ENCODE measurements at regions of chr4 and their contacts with region 1.

Region 1: DNA sequence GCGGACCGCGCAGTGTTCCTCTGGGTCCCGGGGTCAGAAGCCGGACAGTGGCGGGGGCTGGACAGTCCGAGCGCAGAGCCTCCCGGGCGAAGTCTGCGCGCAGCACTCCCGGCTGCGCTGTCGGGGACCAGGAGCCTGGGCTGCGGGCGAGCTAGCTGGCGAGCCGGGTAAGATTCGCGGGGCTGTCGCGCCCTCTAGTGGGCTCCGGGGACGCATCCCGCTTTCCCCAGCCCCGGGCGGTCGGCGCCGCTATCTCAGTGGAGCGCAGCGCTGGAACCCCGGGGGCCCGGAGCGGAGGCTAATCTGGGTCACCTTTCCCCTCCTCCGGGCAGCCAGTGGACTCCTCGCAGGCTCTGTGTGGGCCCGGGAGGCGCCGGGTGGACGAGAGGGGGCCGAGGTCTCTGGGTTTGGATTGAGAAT is 4.2 kb downstream of the PDGFRA start:
- DNase-seq: peak; percentile 82
- H3K4me3 Mint-ChIP-seq: peak overlapping the region; percentile 63
- H3K27ac Mint-ChIP-seq: no peak overlapping the region
- H3K4me1 Mint-ChIP-seq: peaks cover 27% of the 10 kb centered on the region
- H3K27me3 Mint-ChIP-seq: peaks cover 75% of the 10 kb centered on the region

Region 2: GRCh38 chr4:53012738-53013137 is 1220.5 kb before region 1 on chr4:
- CTCF ChIA-PET with region 1: interaction called, 13 read pairs
- DNase-seq: peak; percentile 39
- H3K4me3 Mint-ChIP-seq: peak overlapping the region; percentile 53
- H3K27ac Mint-ChIP-seq: peak overlapping the region; percentile 88
- H3K4me1 Mint-ChIP-seq: peaks cover 40% of the 10 kb centered on the region
- H3K27me3 Mint-ChIP-seq: no peaks in the 10 kb centered on the region

Region 3: DNA sequence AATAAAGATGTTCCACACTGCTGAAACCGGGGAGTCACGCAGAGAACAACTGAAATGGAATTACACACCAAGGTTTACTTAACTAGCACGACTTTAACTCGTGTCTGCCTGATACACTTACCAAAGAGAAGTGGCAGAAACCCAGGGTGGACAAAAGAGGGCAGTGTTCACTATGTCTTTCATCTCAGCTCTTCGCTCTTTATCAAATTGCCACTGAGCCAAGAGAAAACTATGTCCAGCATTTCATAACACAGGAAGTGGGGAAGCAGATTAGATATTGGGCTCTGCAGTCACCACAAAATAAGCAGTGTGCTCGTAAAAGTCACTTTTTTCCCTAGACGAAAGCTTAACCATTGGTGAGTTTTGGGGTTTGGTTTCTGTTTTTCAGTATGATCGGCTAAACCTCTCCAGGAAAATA is 324.6 kb before region 1 on chr4:
- CTCF ChIA-PET with region 1: interaction called, 63 read pairs
- DNase-seq: peak; percentile 22
- H3K4me3 Mint-ChIP-seq: no peak overlapping the region
- H3K27ac Mint-ChIP-seq: no peak overlapping the region
- H3K4me1 Mint-ChIP-seq: peaks cover 11% of the 10 kb centered on the region
- H3K27me3 Mint-ChIP-seq: peaks cover 39% of the 10 kb centered on the region

Region 4: DNA sequence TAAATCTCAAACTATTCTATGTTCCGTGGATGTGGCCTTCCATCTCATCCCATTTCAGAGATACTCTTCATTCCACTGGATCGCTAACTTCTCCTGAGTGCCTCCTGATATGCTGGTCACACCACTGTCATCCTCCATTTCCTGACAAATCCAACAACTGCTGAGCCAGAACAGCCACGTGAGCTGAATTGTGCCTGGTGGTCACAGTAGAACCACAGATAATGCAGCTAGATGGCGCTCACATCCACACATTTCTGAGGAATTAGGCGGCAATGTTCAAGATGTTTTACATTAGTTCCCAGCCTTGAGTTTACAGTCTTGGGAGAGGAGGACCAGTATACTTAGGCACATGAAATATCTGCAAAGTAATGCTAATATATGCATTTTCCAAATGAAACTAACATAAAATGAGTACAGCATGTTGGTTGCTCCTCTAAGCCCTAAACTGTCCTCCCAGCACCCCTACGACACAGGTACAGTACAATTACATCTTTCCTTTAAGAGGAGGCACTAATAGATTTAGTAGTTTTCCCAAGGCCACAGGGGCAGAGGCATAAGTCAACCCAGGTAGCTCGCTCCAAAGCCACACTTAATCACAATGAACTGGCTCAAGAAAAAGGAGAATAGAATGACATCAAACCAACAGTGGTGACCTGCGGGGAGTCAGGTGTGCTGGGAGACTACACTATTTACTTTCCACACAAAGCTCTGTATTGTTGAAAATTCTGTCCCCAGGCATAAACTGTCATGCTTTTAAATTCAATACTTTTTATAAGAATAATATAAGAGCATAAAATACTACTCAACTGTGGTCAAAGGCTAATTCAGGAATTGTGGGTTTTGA is 303.1 kb before region 1 on chr4:
- CTCF ChIA-PET with region 1: interaction called, 36 read pairs
- DNase-seq: peak; percentile 69
- H3K4me3 Mint-ChIP-seq: no peak overlapping the region
- H3K27ac Mint-ChIP-seq: no peak overlapping the region
- H3K4me1 Mint-ChIP-seq: no peaks in the 10 kb centered on the region
- H3K27me3 Mint-ChIP-seq: peaks cover 10% of the 10 kb centered on the region

Region 5: GRCh38 chr4:54099287-54099747 is 134.0 kb before region 1 on chr4:
- CTCF ChIA-PET with region 1: interaction called, 12 read pairs
- DNase-seq: no peak
- H3K4me3 Mint-ChIP-seq: peak overlapping the region; percentile 33
- H3K27ac Mint-ChIP-seq: no peak overlapping the region
- H3K4me1 Mint-ChIP-seq: peaks cover 41% of the 10 kb centered on the region
- H3K27me3 Mint-ChIP-seq: peaks cover 100% of the 10 kb centered on the region

Region 6: GRCh38 chr4:54107951-54108873 is 125.1 kb before region 1 on chr4:
- CTCF ChIA-PET with region 1: interaction called, 15 read pairs
- DNase-seq: no peak
- H3K4me3 Mint-ChIP-seq: no peak overlapping the region
- H3K27ac Mint-ChIP-seq: no peak overlapping the region
- H3K4me1 Mint-ChIP-seq: peaks cover 17% of the 10 kb centered on the region
- H3K27me3 Mint-ChIP-seq: peaks cover 84% of the 10 kb centered on the region

Region 7: DNA sequence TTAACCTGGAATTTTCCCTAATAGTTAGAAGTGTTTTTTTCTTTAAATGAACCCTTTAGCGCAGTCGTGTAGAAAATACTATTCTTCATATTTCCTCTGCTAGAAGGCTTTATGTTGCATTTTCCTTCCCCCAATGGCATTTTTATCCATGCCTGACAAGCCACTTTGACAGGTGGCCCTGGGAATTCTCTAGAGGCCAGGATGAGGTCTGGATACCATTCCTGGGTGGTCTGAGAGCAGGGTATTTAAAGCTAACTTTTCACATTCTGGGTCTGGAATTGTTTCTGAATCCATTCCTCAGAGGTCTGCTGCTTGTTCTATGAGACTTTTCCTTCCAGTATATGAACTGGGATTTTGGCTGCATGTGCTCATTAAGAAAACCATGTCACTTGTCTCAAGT is 35.4 kb before region 1 on chr4:
- CTCF ChIA-PET with region 1: no interaction called
- DNase-seq: no peak
- H3K4me3 Mint-ChIP-seq: no peak overlapping the region
- H3K27ac Mint-ChIP-seq: no peak overlapping the region
- H3K4me1 Mint-ChIP-seq: no peaks in the 10 kb centered on the region
- H3K27me3 Mint-ChIP-seq: peaks cover 14% of the 10 kb centered on the region

Region 8: DNA sequence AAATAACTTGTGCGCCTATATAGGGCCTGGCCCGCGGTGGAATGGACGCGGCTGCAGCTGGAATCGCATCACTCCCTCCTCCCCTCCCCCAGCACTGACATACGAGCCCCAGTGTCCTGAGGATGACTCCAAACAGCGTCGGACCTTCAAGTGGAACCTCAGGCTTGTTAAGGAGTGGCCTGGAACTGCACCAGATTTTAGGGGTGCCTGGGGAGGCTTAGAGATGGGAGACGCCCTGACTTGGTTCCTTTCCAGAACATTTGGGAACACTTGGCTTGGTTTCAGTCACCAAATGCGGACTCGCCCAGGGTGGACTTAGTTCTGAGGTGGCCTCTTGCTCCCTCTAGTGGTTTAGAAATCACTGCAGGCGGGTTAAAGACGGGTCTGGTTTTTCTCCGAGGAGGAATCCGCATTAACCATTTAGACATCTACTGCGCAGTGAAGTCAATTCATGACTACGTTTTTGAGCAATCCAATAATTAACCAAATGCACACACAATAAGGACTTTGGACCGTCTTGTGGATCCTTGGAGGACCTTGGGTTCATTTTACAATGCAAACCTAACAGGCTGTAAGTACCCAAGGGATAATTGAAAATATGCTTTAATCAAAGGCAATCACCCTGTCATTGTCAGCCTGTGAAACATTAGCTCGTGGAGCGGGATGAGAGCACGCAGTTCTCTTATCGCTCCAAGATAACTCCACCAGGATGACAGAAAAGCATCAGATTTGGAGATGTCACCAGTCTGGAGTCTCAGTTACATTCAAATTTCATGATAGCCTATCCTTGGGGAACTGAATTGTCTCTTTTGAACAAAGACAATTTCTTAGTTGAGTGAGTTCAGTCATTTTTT is 15.4 kb before region 1 on chr4:
- CTCF ChIA-PET with region 1: interaction called, 14 read pairs
- DNase-seq: peak; percentile 64
- H3K4me3 Mint-ChIP-seq: no peak overlapping the region
- H3K27ac Mint-ChIP-seq: no peak overlapping the region
- H3K4me1 Mint-ChIP-seq: peaks cover 4% of the 10 kb centered on the region
- H3K27me3 Mint-ChIP-seq: peaks cover 37% of the 10 kb centered on the region

Region 9: GRCh38 chr4:54581807-54582206 is 348.5 kb after region 1 on chr4:
- CTCF ChIA-PET with region 1: no interaction called
- DNase-seq: no peak
- H3K4me3 Mint-ChIP-seq: no peak overlapping the region
- H3K27ac Mint-ChIP-seq: no peak overlapping the region
- H3K4me1 Mint-ChIP-seq: no peaks in the 10 kb centered on the region
- H3K27me3 Mint-ChIP-seq: no peaks in the 10 kb centered on the region